Activated CD4-positive, alpha-beta T cell treated with anti-CD3 and anti-CD28 coated beads for 36 hours (primary cell): ENCODE measurements at regions of chr2 and their contacts with region 1.

Region 1: DNA sequence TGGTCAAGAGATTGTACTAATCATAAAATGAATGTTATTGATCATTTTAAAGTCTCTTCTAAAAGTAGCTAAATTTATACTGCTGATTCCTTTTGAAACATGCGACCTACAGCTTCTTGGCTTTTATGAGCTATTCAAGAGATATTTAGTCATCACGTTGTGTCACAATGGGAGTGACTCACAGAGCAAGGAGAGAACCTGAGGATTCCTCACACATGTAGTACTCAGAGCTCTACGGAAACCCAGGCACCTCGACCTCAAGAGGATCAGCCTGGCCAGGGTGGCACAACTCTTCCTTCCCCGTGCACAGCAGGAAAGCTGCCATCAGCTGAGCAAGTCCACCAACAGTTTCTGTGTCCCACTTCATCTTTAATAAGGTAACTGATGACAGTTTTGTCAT is at the start of gene DHRS9:
- DNase-seq: peak; percentile 67
- ATAC-seq: peak; percentile 88
- H3K4me3 Mint-ChIP-seq: peak within 1 kb of the TSS; percentile 69
- H3K27ac Mint-ChIP-seq: peak within 1 kb of the TSS; percentile 70
- H3K4me1 Mint-ChIP-seq: peaks cover 42% of the 10 kb centered on the region
- H3K27me3 Mint-ChIP-seq: no peaks in the 10 kb centered on the region
- total RNA-seq, gene DHRS9: 4.1 to 4.8 TPM

Region 2: DNA sequence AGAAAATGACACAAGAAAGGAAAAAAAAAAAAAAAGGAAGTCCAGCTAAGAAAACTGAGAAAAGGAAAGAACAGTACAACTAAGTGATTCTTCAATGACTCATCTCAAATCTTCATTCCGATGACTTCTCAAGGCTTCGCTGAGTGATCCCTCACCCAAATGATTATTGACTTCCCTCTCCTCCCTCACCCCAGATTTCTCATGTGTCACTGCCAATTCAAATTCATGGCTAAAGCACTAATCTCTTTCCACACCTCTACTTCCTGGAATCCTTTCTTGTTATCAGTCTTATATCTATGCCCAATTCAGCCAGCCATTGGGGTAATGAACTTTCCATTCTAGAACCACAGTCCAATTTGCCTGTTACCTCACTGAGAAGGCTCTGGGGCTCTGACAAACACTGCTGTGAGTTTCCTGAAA is 31.0 kb before region 1 on chr2:
- CTCF ChIA-PET with region 1: no interaction called
- POLR2A ChIA-PET with region 1: no interaction called
- intact Hi-C with region 1: loop called in 1 of 2 experiments (anchors 2 kb)
- DNase-seq: no peak
- ATAC-seq: peak; percentile 88
- H3K4me3 Mint-ChIP-seq: no peak overlapping the region
- H3K27ac Mint-ChIP-seq: no peak overlapping the region
- H3K4me1 Mint-ChIP-seq: peaks cover 4% of the 10 kb centered on the region
- H3K27me3 Mint-ChIP-seq: no peaks in the 10 kb centered on the region

Region 3: GRCh38 chr2:169095621-169096105 is 26.3 kb after region 1 on chr2:
- CTCF ChIA-PET with region 1: interaction called, 4 read pairs
- POLR2A ChIA-PET with region 1: no interaction called
- intact Hi-C with region 1: loop called (anchors 1 kb)
- DNase-seq: peak; percentile 34
- ATAC-seq: peak; percentile 87
- H3K4me3 Mint-ChIP-seq: no peak overlapping the region
- H3K27ac Mint-ChIP-seq: peak overlapping the region; percentile 28
- H3K4me1 Mint-ChIP-seq: peaks cover 25% of the 10 kb centered on the region
- H3K27me3 Mint-ChIP-seq: peaks cover 6% of the 10 kb centered on the region

Region 4: DNA sequence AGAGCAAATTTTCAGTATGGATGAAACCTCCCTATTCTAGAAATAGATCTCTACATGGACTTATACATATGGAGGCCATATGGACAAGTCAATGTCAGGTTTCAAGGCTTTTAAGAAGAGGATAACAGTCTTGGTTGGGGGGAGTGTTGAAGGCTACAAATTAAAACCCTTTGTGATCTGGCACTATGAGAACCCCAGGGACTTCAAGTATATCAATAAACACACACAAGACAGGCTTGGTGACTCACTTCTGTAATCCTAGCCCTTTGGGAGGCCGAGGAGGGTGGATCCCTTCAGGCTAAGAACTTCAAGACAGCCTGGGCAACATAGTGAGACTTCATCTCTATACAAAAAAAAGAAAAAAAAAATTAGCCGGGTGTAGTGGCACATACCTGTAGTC is 1518.6 kb after region 1 on chr2:
- CTCF ChIA-PET with region 1: no interaction called
- POLR2A ChIA-PET with region 1: no interaction called
- intact Hi-C with region 1: no loop called
- DNase-seq: no peak
- ATAC-seq: no peak
- H3K4me3 Mint-ChIP-seq: no peak overlapping the region
- H3K27ac Mint-ChIP-seq: no peak overlapping the region
- H3K4me1 Mint-ChIP-seq: no peaks in the 10 kb centered on the region
- H3K27me3 Mint-ChIP-seq: peaks cover 3% of the 10 kb centered on the region